Natural killer cell (primary cell): ENCODE measurements at regions of chr10 and their contacts with region 1.

Region 1: DNA sequence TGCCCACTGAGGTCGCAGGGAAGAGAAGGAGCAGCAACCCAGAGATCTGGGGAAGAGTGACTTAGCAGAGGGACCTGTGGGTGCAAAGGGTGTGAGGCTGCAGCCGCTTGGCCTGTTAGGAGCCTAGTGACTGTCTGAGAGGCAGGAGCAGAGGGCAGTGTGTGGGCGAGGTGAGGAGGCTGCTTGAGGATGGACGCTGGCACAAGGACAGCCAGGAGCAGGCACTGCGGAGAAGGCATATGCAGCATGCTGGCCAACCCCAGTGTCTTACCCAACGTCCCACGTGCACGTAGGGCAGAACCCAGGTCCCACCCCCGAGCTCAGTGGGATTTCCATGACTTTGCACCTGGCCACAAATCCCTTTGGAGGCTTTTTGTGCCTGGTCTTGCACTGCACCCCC is 54.1 kb downstream of the C10orf105 start:
- DNase-seq: no peak
- ATAC-seq: no peak
- H3K4me3 ChIP-seq: no peak overlapping the region
- H3K4me3 Mint-ChIP-seq: no peak overlapping the region
- H3K27ac ChIP-seq: no peak overlapping the region
- H3K27ac Mint-ChIP-seq: no peak overlapping the region
- H3K4me1 ChIP-seq: peaks cover 17% of the 10 kb centered on the region
- H3K4me1 Mint-ChIP-seq: peaks cover 7 to 16% of the 10 kb centered on the region in 2 donors
- H3K27me3 ChIP-seq: no peaks in the 10 kb centered on the region
- H3K27me3 Mint-ChIP-seq: peaks cover 0 to 10% of the 10 kb centered on the region in 2 donors
- CTCF ChIP-seq: no peak

Region 2: DNA sequence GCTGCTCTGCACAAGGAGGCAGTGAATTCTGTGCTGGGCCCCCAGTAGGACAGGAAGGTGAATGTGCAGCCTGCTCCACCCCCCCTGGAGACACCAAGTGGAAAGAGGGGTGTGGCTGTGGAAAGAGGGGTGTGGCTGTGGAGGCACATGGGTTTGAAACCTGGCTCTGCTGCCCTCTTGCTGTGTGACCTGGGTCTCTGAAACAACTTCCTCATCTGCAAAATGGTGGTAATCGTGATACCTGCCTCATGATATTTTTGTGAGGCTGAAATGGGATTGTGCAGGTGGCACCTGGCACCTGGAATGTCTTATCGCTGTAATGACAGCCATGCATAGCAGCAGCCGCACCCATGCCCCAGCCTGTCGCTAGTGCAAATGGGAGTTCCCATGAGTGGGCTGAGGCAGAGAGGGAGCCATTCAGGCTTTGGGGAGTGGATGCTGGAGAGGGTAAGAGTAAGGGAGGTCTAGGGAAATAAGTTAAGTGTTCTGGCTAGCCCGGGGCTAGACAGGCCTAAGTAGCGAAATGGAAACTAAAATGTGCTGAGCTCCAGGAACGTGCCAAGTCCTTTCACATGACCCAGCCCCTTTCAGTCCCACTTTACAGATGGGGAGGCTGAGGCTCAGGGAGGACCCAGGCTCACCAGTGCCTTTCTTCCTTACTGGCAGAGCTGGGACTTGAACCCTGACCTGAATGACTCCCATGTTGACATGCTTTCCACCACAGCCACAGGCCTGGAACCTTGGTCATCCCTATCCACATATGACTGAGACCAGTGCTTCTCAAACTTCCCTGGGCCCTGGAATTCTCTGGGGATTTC is 19.1 kb after region 1 on chr10:
- intact Hi-C with region 1: no loop called
- DNase-seq: no peak
- ATAC-seq: no peak
- H3K4me3 ChIP-seq: no peak overlapping the region
- H3K4me3 Mint-ChIP-seq: no peak overlapping the region
- H3K27ac ChIP-seq: no peak overlapping the region
- H3K27ac Mint-ChIP-seq: no peak overlapping the region
- H3K4me1 ChIP-seq: peaks cover 14% of the 10 kb centered on the region
- H3K4me1 Mint-ChIP-seq: peaks cover 0 to 31% of the 10 kb centered on the region in 2 donors
- H3K27me3 ChIP-seq: no peaks in the 10 kb centered on the region
- H3K27me3 Mint-ChIP-seq: no peaks in the 10 kb centered on the region
- CTCF ChIP-seq: no peak

Region 3: GRCh38 chr10:71708301-71708703 is 42.8 kb after region 1 on chr10:
- intact Hi-C with region 1: loop called (anchors 1 kb)
- DNase-seq: peak; percentile 62 to 80
- ATAC-seq: peak; percentile 60 to 93 (median 90)
- H3K4me3 ChIP-seq: no peak overlapping the region
- H3K4me3 Mint-ChIP-seq: no peak overlapping the region
- H3K27ac ChIP-seq: no peak overlapping the region
- H3K27ac Mint-ChIP-seq: no peak overlapping the region
- H3K4me1 ChIP-seq: peaks cover 35% of the 10 kb centered on the region
- H3K4me1 Mint-ChIP-seq: peaks cover 8 to 23% of the 10 kb centered on the region in 2 donors
- H3K27me3 ChIP-seq: no peaks in the 10 kb centered on the region
- H3K27me3 Mint-ChIP-seq: no peaks in the 10 kb centered on the region
- CTCF ChIP-seq: peak; percentile 95

Region 4: GRCh38 chr10:71812016-71812912 is 146.8 kb after region 1 on chr10:
- intact Hi-C with region 1: loop called (anchors 2 kb)
- DNase-seq: peak; percentile 75 to 88
- ATAC-seq: peak; percentile 86 to 96 (median 96)
- H3K4me3 ChIP-seq: no peak overlapping the region
- H3K4me3 Mint-ChIP-seq: no peak overlapping the region
- H3K27ac ChIP-seq: no peak overlapping the region
- H3K27ac Mint-ChIP-seq: no peak overlapping the region
- H3K4me1 ChIP-seq: peaks cover 10% of the 10 kb centered on the region
- H3K4me1 Mint-ChIP-seq: no peaks in the 10 kb centered on the region
- H3K27me3 ChIP-seq: no peaks in the 10 kb centered on the region
- H3K27me3 Mint-ChIP-seq: peaks cover 0 to 5% of the 10 kb centered on the region in 2 donors
- CTCF ChIP-seq: peak; percentile 78